K562 (cell line): ENCODE measurements at regions of chr1 and their contacts with region 1.

Region 1: DNA sequence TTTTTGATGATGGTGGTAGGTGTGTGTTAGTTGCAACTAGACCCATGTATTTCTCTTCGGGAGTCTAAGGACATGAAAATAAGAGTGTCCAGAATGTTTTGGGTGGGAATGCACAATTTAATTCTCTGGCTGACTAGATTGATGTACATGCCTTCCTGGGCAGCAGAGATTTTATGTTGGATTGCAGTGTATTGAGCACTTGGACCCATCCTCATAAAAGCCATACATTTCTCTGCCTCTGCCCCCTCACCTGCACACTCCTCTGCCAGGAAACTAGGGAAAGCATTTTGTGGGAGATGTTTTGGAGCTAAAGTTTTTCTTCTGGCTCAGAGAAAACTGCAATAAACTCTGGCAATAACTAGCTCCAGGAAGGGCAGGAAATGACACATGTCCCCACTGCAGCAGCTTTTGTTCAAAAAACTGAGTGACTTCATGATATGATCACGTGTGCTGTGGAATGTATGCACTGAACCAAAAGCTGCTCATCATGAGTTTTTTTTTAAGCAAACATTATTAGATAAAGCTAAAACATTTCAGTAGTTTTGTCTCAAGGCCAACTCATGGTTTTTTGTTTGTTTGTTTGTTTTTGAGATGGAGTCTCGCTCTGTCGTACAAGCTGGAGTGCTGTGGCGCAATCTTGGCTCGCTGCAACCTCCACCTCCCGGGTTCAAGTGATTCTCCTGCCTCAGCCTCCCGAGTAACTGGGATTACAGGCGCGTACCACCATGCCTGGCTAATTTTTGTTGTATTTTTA is 17.6 kb downstream of the RIT1 start:
- DNase-seq: peak in 1 of 4 experiments; percentile 4
- ATAC-seq: peak; percentile 65; the same call in 2 of the 3 replicates
- H3K4me3 ChIP-seq: no peak overlapping the region
- H3K27ac ChIP-seq: no peak overlapping the region
- H3K4me1 ChIP-seq: peaks cover 0 to 4% of the 10 kb centered on the region in 2 experiments; a peak in 3 of 5 replicates
- H3K27me3 ChIP-seq: no peaks in the 10 kb centered on the region
- CTCF ChIP-seq: no peak
- EP300 ChIP-seq: no peak
- POLR2A ChIP-seq: no peak
- RAD21 ChIP-seq: no peak

Region 2: GRCh38 chr1:155904266-155904665 is 10.7 kb after region 1 on chr1:
- CTCF ChIA-PET with region 1: no interaction called
- POLR2A ChIA-PET with region 1: interaction called, 14 read pairs
- in situ Hi-C with region 1: no loop called
- intact Hi-C with region 1: no loop called
- DNase-seq: no peak
- ATAC-seq: no peak
- H3K4me3 ChIP-seq: no peak overlapping the region
- H3K27ac ChIP-seq: no peak overlapping the region
- H3K4me1 ChIP-seq: peaks cover 3 to 13% of the 10 kb centered on the region in 2 experiments; a peak in 3 of 5 replicates
- H3K27me3 ChIP-seq: no peaks in the 10 kb centered on the region
- CTCF ChIP-seq: no peak
- EP300 ChIP-seq: no peak
- POLR2A ChIP-seq: no peak
- RAD21 ChIP-seq: no peak